Esophagus muscularis mucosa (tissue), 4 donors: ENCODE measurements at regions of chr3 and their contacts with region 1.

Region 1: DNA sequence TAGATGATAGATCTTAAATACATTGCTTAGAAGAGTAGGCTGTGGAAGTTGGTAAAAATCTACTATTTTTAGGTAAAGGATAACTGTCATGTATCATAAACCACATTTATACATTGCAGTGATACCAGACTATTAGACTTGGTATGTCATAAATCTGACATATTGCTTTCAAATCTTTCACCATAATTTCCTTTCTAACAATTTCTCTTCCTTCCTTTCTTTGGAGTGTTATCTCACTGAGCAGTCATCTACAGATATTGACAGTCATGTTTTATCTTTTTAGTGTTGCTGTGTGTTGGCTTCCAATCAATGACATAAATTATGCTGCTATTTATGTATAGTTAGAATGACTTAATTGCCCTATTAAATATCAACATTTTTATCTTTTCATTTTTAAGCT is 588.7 kb downstream of the TUSC7 start:
- DNase-seq: no peak
- H3K4me3 ChIP-seq: no peak overlapping the region
- H3K27ac ChIP-seq: no peak overlapping the region
- H3K4me1 ChIP-seq: no peaks in the 10 kb centered on the region
- H3K27me3 ChIP-seq: no peaks in the 10 kb centered on the region
- CTCF ChIP-seq: no peak
- EP300 ChIP-seq: no peak
- POLR2A ChIP-seq: no peak

Region 2: DNA sequence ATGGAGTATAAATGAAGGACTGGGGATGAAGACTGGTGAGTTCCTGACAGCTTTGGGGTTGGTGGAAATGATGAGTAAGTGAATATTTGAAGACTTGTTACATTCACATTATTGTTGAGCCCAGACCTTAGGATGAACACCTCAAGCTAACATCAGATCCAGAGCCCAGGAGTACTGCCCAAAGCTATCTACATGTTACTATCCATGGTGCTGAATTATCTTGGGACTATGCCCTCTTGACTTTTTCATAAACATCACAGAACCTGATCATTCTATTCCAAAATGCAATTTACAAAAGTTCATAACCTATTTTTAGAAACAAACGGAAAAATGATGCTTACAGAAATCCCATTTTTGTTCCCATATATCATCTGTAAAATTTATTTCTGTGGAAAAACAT is 24.6 kb after region 1 on chr3:
- intact Hi-C with region 1: loop called (anchors 2 kb)
- DNase-seq: no peak
- H3K4me3 ChIP-seq: no peak overlapping the region
- H3K27ac ChIP-seq: no peak overlapping the region
- H3K4me1 ChIP-seq: no peaks in the 10 kb centered on the region
- H3K27me3 ChIP-seq: no peaks in the 10 kb centered on the region
- CTCF ChIP-seq: no peak
- EP300 ChIP-seq: no peak
- POLR2A ChIP-seq: no peak

Region 3: DNA sequence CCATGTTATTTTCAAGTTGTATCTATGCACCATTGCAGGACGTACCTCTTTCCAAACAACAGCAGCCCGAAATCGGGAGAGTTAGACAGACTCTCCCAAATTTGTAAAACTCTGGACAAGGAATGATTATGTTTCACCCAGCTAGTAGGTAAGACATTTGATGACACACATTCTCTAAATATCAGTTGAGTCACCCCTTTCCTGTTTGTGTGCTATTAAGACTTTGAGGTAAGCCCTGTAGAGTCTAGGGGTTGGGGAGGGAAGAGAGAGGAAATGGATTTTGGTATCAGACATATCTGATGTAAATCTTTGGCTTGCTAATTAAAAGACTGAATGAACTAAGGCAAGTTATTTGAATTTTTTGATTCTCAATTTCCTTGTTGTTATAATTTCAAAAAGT is 410.3 kb after region 1 on chr3:
- intact Hi-C with region 1: no loop called
- DNase-seq: no peak
- H3K4me3 ChIP-seq: no peak overlapping the region
- H3K27ac ChIP-seq: no peak overlapping the region
- H3K4me1 ChIP-seq: peaks cover 0 to 6% (median 0%) of the 10 kb centered on the region in 4 donors
- H3K27me3 ChIP-seq: no peaks in the 10 kb centered on the region
- CTCF ChIP-seq: no peak
- EP300 ChIP-seq: no peak
- POLR2A ChIP-seq: no peak